Esophagus muscularis mucosa (tissue), 4 donors: ENCODE measurements at regions of chr5 and their contacts with region 1.

Region 1: GRCh38 chr5:139181835-139182452 is 16.2 kb downstream of the SIL1 start:
- DNase-seq: no peak
- H3K4me3 ChIP-seq: no peak overlapping the region
- H3K27ac ChIP-seq: peak overlapping the region; percentile 2 to 55 (median 47)
- H3K4me1 ChIP-seq: peaks cover 66 to 99% (median 97%) of the 10 kb centered on the region in 4 donors
- H3K27me3 ChIP-seq: no peaks in the 10 kb centered on the region
- CTCF ChIP-seq: no peak
- EP300 ChIP-seq: no peak
- POLR2A ChIP-seq: no peak

Region 2: GRCh38 chr5:139104577-139105276 is 77.2 kb before region 1 on chr5:
- intact Hi-C with region 1: loop called (anchors 5 kb)
- DNase-seq: no peak
- H3K4me3 ChIP-seq: peak overlapping the region in 2 of 4 donors; percentile 15 to 30
- H3K27ac ChIP-seq: peak overlapping the region; percentile 78 to 87 (median 84)
- H3K4me1 ChIP-seq: peaks cover 21 to 65% (median 61%) of the 10 kb centered on the region in 4 donors
- H3K27me3 ChIP-seq: no peaks in the 10 kb centered on the region
- CTCF ChIP-seq: no peak
- EP300 ChIP-seq: no peak
- POLR2A ChIP-seq: no peak